ENCODE measurements at regions of chr12 and their contacts with region 1.

Region 1: DNA sequence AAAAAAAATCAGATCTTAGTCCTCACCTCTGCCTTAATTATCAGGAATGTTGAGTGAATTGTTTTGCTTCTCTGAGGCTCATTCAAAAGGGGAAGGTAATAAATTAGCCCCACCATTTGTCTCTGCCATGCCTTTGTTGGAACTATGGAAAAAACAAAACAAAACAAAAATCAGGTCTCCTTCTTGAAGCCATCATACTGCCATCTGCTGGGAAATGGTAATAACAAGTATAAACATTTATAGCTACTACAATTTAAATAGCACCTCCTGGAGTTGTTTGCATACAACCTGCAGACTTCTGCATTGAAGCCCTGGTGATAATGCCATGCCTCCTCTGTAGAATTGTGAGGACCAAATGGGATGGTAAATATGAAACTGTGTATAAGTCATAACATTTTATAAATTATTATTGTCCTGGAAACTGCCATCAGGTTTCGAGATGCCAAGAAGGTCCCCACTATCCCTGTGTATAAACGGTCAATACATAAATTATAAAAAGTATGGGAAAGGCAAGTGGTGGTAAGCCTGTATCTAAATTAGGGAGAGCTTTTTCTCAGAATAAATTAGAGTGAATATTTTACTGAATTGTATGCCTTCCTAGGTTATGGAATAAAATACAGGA is 87.2 kb upstream of the FGD4 start:
- DNase-seq: no peak
- H3K4me3 ChIP-seq: no peak overlapping the region
- H3K27ac ChIP-seq: no peak overlapping the region
- H3K4me1 ChIP-seq: peaks cover 0 to 4% (median 0%) of the 10 kb centered on the region in 4 donors
- H3K27me3 ChIP-seq: no peaks in the 10 kb centered on the region
- CTCF ChIP-seq: peak in 3 of 4 experiments; percentile 36 to 49 (median 46)
- EP300 ChIP-seq: no peak
- POLR2A ChIP-seq: no peak

Region 2: DNA sequence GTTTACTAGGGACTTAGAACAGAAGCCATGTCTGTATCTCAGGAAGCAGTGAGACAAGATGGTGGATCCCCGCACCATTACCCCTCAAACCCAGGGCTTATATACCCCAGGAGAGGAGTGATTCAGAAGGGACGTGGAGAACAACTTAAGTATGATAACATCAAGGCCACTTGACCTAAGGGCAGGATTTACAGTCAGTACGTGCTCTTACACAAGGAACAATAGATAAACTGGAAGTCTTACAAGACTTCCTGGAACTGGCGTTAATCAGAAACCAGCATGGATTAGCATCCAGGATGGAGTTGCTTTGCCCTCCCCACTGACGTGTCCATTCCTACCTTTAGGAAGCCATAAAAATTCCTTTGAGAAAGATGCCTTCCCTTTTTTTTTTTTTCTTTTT is 661.2 kb before region 1 on chr12:
- intact Hi-C with region 1: loop called (anchors 5 kb)
- DNase-seq: no peak
- H3K4me3 ChIP-seq: peak overlapping the region in 2 of 4 donors; percentile 41 to 43
- H3K27ac ChIP-seq: peak overlapping the region in 1 of 4 donors; percentile 72
- H3K4me1 ChIP-seq: peaks cover 0 to 12% (median 8%) of the 10 kb centered on the region in 4 donors
- H3K27me3 ChIP-seq: no peaks in the 10 kb centered on the region
- CTCF ChIP-seq: no peak
- EP300 ChIP-seq: peak in 1 of 4 donors; percentile 50
- POLR2A ChIP-seq: no peak

Measured in sigmoid colon (tissue), 7 donors.